ENCODE measurements at regions of chr2 and their contacts with region 1.

Region 1: DNA sequence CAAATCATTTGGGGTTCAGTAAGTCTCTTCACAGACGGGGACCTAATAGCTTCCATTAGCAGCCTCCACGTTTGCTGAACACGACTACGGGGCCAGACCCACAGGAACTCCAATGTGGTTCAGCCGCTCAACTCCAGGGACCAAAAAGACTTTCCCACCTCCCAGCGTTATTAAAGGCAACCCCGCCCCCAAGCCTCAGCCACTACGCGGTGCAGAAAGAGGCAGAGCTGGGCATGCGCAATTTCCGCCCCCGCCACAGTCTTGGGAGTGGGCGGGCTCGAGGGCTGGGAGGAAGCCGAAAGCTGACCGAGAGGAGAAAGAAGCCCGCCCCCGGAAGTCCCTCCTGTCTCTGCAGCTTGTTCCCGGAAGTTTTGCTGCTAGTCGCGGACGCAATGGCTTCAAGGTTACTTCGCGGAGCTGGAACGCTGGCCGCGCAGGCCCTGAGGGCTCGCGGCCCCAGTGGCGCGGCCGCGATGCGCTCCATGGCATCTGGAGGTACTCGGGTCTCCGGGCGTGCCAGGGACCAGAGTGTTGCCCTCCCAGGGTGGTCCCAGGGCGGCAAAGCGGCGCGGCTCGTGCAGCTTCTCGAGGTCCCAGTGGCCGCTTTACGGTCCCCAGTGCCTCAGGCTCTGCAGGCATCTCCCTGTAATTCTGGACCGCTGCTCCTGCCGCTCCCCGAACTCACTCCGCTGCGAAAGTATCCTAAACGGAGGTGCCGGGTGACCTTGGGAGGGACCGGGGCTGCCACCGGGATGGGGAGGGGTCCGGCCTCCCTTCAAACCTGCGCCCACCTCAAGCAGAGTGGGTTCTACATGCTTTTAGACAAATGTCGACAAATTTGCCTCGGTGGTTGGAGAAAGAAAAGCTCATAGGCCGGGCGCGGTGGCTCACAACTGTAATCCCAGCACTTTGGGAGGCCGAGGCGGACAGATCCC is at the start of gene COX5B:
- DNase-seq: peak; percentile 98 to 100 (median 99)

Region 2: DNA sequence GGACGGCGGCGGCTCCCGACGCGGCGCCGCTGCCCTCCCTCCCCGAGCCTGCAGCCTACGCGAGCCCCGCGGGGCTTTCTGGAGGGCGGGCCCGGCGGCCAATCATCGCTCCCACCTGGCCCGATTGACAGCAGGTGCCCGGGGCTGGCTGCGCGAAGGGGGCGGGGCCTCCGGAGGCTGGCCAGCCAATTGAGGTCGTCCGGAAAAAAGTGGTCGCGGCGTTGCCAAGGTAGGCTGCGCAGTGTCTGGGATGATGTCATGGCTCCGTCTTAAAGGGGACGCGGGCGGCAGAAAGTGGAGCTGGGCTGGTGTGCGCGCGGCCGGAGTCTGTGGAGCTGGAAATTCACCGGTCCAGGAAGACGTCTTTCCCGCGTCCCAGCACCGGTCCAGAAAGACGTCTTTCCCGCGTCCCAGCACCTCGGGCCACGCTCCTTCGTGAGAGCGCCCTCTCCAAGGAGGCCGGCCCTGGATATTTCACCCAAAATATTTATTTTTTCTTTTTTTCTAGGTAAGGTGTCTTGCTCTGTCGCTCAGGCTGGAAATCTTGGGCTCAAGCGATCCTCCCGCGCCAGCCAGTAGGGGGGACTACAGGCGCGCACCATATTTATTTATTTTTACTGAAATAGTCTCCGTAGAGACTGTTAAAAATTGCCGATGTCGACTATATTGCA is 18.1 kb after region 1 on chr2 and contains the start of gene ACTR1B:
- intact Hi-C with region 1: loop called (anchors 1 kb)
- DNase-seq: peak; percentile 96 to 99 (median 98)

Measured in head of caudate nucleus (tissue), 42 donors.